CD4-positive, alpha-beta memory T cell (primary cell): ENCODE measurements at regions of chr4 and their contacts with region 1.

Region 1: DNA sequence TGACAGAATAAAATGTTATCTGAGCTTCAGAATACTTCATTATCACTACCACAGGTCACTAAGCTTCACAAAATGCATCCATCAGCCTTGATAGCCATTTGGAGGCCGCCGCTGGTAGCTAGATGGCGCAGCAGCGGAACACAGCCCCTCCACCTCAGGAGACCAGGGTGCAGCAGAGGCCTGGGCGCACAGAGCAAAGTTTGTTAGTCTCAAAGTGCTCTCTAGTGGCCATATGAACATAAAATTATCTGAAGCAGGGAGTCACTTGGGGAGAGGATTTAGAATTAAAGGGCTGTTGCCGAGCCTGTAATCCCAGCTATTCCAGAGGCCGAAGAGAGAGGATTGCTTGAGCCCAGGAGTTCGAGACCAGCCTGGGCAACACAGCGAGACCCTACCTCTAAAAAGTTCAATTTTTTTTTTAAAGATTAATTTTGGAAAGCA is 8.1 kb upstream of the DCTD start:
- DNase-seq: peak; percentile 43 to 55 (median 47)
- H3K4me3 ChIP-seq: no peak overlapping the region
- H3K4me3 Mint-ChIP-seq: no peak overlapping the region
- H3K27ac ChIP-seq: no peak overlapping the region
- H3K27ac Mint-ChIP-seq: no peak overlapping the region
- H3K4me1 ChIP-seq: no peaks in the 10 kb centered on the region
- H3K4me1 Mint-ChIP-seq: peaks cover 0 to 2% (median 0%) of the 10 kb centered on the region in 4 donors
- H3K27me3 ChIP-seq: no peaks in the 10 kb centered on the region
- H3K27me3 Mint-ChIP-seq: no peaks in the 10 kb centered on the region

Region 2: DNA sequence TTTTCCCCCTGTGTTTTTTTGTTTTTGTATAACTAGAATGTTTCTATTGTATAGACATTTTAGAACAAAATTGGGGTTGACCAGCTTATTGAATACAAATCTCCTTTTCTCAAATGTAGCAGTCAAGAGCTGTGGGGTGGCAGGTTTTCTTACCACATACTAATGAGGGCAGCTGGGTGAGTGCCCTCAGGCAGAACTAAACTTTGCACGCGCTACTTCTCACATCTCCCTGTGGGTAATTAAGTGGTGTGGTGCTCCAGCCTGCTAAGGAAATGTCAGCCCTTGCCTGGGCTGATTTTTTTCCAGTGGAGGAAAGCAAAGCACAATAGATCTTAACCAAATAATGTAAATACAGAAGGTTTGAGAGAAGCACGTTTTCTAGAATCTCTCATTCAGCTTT is 1399.7 kb before region 1 on chr4:
- CTCF ChIA-PET with region 1: no interaction called
- POLR2A ChIA-PET with region 1: no interaction called
- intact Hi-C with region 1: no loop called
- DNase-seq: no peak
- H3K4me3 ChIP-seq: no peak overlapping the region
- H3K4me3 Mint-ChIP-seq: no peak overlapping the region
- H3K27ac ChIP-seq: no peak overlapping the region
- H3K27ac Mint-ChIP-seq: no peak overlapping the region
- H3K4me1 ChIP-seq: no peaks in the 10 kb centered on the region
- H3K4me1 Mint-ChIP-seq: no peaks in the 10 kb centered on the region
- H3K27me3 ChIP-seq: no peaks in the 10 kb centered on the region
- H3K27me3 Mint-ChIP-seq: no peaks in the 10 kb centered on the region

Region 3: GRCh38 chr4:182478475-182478874 is 446.8 kb before region 1 on chr4:
- CTCF ChIA-PET with region 1: interaction called, 14 read pairs
- POLR2A ChIA-PET with region 1: no interaction called
- intact Hi-C with region 1: no loop called
- DNase-seq: peak in 4 of 5 donors; percentile 14 to 32 (median 21)
- H3K4me3 ChIP-seq: no peak overlapping the region
- H3K4me3 Mint-ChIP-seq: no peak overlapping the region
- H3K27ac ChIP-seq: no peak overlapping the region
- H3K27ac Mint-ChIP-seq: no peak overlapping the region
- H3K4me1 ChIP-seq: no peaks in the 10 kb centered on the region
- H3K4me1 Mint-ChIP-seq: no peaks in the 10 kb centered on the region
- H3K27me3 ChIP-seq: no peaks in the 10 kb centered on the region
- H3K27me3 Mint-ChIP-seq: peaks cover 3 to 6% of the 10 kb centered on the region in 2 donors

Region 4: DNA sequence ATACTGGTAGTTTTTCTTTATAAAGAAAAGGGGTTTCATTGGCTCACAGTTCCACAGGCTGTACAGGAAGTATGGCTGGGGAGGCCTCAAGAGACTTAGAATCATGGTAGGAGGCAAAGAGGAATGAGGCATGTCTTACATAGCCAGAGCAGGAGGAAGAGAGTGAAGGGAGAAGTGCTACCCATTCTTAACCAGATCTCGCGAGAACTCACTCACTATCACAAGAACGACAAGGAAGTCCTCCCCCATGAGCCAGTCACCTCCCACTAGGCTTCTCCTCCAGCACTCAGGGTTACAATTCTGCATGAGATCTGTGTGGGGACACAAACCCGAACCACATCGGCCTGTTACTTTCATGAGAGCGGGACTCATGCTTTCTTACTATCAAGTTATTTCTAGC is 441.6 kb before region 1 on chr4:
- CTCF ChIA-PET with region 1: interaction called, 14 read pairs
- POLR2A ChIA-PET with region 1: no interaction called
- intact Hi-C with region 1: no loop called
- DNase-seq: no peak
- H3K4me3 ChIP-seq: no peak overlapping the region
- H3K4me3 Mint-ChIP-seq: no peak overlapping the region
- H3K27ac ChIP-seq: no peak overlapping the region
- H3K27ac Mint-ChIP-seq: no peak overlapping the region
- H3K4me1 ChIP-seq: no peaks in the 10 kb centered on the region
- H3K4me1 Mint-ChIP-seq: no peaks in the 10 kb centered on the region
- H3K27me3 ChIP-seq: no peaks in the 10 kb centered on the region
- H3K27me3 Mint-ChIP-seq: peaks cover 0 to 2% of the 10 kb centered on the region in 2 donors

Region 5: DNA sequence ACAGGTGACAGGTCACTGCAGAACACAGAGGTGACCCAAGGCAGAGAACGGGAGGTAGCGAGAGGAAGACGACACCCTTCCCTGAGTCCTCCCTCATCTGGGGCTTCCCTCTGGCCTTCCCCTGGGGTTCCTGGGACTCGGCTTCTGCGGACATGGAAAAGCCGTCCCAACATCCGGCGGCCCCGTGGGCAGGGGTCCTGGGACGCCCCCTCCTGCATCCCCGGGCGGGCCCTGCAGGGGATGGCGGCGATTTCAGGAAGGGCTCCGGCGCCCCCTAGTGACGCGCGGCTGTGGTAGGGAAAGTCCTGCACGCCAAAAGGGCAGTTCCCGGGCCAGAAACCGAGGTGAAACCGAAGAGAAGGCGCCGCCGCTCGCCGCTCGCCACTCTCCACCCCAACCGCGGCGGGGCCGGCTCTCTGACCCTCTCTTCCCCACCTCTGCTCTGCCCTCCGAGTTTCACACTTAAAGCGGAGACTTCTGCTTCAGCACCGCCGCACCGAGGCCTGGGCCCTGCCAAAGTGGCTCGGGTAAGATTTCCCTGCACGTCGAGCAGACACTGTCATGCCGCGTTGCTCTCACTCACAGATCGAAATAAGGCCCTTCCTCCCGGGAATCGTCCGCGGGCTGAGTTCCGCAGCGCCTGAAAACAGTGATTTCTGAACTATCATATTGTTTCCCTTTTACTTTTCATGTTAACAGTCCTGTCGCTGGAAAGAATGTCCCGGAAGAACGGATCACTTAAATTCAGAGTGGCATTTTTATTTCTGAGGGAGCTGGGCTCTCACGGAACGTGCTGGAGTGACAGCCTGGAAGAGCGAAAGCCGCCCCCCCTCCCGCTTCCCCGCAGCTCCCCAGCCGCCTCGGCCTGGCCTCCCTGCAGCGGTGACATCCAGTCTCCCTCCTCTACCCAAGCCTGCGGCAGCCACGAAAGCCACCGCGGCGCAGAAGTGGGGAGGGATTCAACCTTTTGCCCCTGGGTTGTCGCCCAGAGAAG is 118.8 kb before region 1 on chr4:
- CTCF ChIA-PET with region 1: no interaction called
- POLR2A ChIA-PET with region 1: no interaction called
- intact Hi-C with region 1: loop called (anchors 2 kb)
- DNase-seq: peak; percentile 11 to 53 (median 48)
- H3K4me3 ChIP-seq: peak overlapping the region in 1 of 2 donors; percentile 28
- H3K4me3 Mint-ChIP-seq: peak overlapping the region; percentile 31 to 92 (median 76)
- H3K27ac ChIP-seq: no peak overlapping the region
- H3K27ac Mint-ChIP-seq: peak overlapping the region in 5 of 7 donors; percentile 30 to 77 (median 56)
- H3K4me1 ChIP-seq: peaks cover 25% of the 10 kb centered on the region
- H3K4me1 Mint-ChIP-seq: peaks cover 8 to 19% (median 9%) of the 10 kb centered on the region in 4 donors
- H3K27me3 ChIP-seq: no peaks in the 10 kb centered on the region
- H3K27me3 Mint-ChIP-seq: peaks cover 0 to 1% of the 10 kb centered on the region in 2 donors

Region 6: GRCh38 chr4:182906786-182907185 is 18.5 kb before region 1 on chr4:
- CTCF ChIA-PET with region 1: interaction called, 13 read pairs
- POLR2A ChIA-PET with region 1: no interaction called
- intact Hi-C with region 1: no loop called
- DNase-seq: no peak
- H3K4me3 ChIP-seq: no peak overlapping the region
- H3K4me3 Mint-ChIP-seq: no peak overlapping the region
- H3K27ac ChIP-seq: no peak overlapping the region
- H3K27ac Mint-ChIP-seq: peak overlapping the region in 1 of 7 donors; percentile 60
- H3K4me1 ChIP-seq: no peaks in the 10 kb centered on the region
- H3K4me1 Mint-ChIP-seq: peaks cover 10 to 20% (median 16%) of the 10 kb centered on the region in 4 donors
- H3K27me3 ChIP-seq: no peaks in the 10 kb centered on the region
- H3K27me3 Mint-ChIP-seq: no peaks in the 10 kb centered on the region

Region 7: GRCh38 chr4:183422967-183423631 is 497.8 kb after region 1 on chr4:
- CTCF ChIA-PET with region 1: no interaction called
- POLR2A ChIA-PET with region 1: no interaction called
- intact Hi-C with region 1: no loop called
- DNase-seq: no peak
- H3K4me3 ChIP-seq: no peak overlapping the region
- H3K4me3 Mint-ChIP-seq: no peak overlapping the region
- H3K27ac ChIP-seq: no peak overlapping the region
- H3K27ac Mint-ChIP-seq: peak overlapping the region in 1 of 7 donors; percentile 19
- H3K4me1 ChIP-seq: peaks cover 5% of the 10 kb centered on the region
- H3K4me1 Mint-ChIP-seq: peaks cover 7 to 12% (median 8%) of the 10 kb centered on the region in 4 donors
- H3K27me3 ChIP-seq: no peaks in the 10 kb centered on the region
- H3K27me3 Mint-ChIP-seq: no peaks in the 10 kb centered on the region